A549 (cell line): ENCODE measurements at regions of chr11 and their contacts with region 1.

Region 1: DNA sequence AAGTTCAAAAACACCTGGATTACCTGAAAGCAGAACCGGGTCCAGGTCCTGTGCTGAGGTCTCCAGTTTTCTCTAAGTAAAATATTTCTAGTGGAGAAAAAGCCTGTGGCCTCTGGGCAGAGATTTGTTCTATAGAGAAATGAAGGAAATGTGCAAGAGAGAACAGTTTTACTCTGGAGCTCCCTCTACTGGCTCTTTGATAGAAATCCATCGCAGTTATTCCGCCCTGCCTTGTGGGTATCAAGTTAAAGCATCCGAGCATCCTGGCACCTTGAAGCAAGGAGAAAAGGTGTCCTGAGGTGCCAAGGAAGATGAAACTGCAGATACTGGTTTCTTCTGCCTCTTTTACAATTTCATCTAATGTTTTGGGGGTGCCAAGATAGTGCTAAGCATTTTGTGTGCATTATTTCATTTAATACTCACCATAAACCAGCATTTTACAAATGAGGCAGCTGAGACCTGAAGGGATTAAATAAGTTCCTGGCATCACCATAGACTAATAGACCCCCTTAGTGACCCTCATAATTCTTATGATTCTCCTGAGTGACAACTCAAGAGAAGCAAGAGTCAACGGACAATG is 113.1 kb upstream of the HSD17B12 start:
- DNase-seq: peak; percentile 58 to 67
- ATAC-seq: peak; percentile 60 to 90; a peak in 4 of 6 replicates
- H3K4me3 ChIP-seq: no peak overlapping the region
- H3K27ac ChIP-seq: no peak overlapping the region
- H3K4me1 ChIP-seq: no peaks in the 10 kb centered on the region
- CTCF ChIP-seq: peak; percentile 68
- EP300 ChIP-seq: no peak
- POLR2A ChIP-seq: no peak
- RAD21 ChIP-seq: peak; percentile 39 to 48; a peak in 3 of 5 replicates

Region 2: DNA sequence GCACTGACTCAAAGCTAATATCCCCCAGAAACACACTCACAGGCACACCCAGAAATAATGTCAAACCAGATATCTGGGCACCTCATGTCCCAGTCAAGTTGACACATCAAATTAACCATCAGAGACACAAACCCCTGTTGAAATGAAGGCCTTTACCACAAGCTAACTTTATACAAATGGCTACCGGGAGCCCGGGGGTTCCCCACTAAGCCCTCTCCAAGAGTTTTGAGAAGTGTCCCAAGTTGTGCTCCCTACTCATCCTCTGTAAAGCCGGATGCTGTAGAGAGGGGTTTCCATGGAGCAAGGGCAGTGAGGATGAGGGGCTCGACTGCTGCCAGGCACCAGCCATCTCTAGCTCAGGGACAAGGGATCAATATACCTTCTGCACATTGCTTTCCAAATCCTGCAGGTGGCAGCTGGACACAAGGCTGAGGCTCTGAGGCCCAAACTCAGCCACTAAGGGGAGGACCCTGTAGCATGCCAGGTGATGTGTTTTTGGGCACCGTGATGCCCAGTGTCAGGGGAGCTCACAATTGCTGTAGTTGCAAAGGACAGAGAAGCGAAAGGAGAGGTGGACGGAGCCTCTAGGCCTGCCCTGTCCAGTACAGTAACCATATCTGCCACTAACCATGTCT is 63.1 kb before region 1 on chr11:
- CTCF ChIA-PET with region 1: interaction called, 30 read pairs
- POLR2A ChIA-PET with region 1: no interaction called
- DNase-seq: peak; percentile 28 to 39
- ATAC-seq: peak; percentile 80 to 84; a peak in 5 of 6 replicates
- H3K4me3 ChIP-seq: no peak overlapping the region
- H3K27ac ChIP-seq: no peak overlapping the region
- H3K4me1 ChIP-seq: no peaks in the 10 kb centered on the region
- CTCF ChIP-seq: no peak
- EP300 ChIP-seq: no peak
- POLR2A ChIP-seq: no peak
- RAD21 ChIP-seq: peak; percentile 47 to 65; a peak in 4 of 5 replicates

Region 3: GRCh38 chr11:43601511-43601910 is 34.0 kb after region 1 on chr11:
- CTCF ChIA-PET with region 1: no interaction called
- POLR2A ChIA-PET with region 1: no interaction called
- DNase-seq: no peak
- ATAC-seq: no peak
- H3K4me3 ChIP-seq: no peak overlapping the region
- H3K27ac ChIP-seq: no peak overlapping the region
- H3K4me1 ChIP-seq: no peaks in the 10 kb centered on the region
- CTCF ChIP-seq: no peak
- EP300 ChIP-seq: no peak
- POLR2A ChIP-seq: no peak
- RAD21 ChIP-seq: no peak

Region 4: GRCh38 chr11:43765194-43765593 is 197.7 kb after region 1 on chr11:
- CTCF ChIA-PET with region 1: no interaction called
- POLR2A ChIA-PET with region 1: no interaction called
- DNase-seq: no peak
- ATAC-seq: no peak
- H3K4me3 ChIP-seq: no peak overlapping the region
- H3K27ac ChIP-seq: no peak overlapping the region
- H3K4me1 ChIP-seq: no peaks in the 10 kb centered on the region
- CTCF ChIP-seq: no peak
- EP300 ChIP-seq: no peak
- POLR2A ChIP-seq: no peak
- RAD21 ChIP-seq: no peak

Region 5: DNA sequence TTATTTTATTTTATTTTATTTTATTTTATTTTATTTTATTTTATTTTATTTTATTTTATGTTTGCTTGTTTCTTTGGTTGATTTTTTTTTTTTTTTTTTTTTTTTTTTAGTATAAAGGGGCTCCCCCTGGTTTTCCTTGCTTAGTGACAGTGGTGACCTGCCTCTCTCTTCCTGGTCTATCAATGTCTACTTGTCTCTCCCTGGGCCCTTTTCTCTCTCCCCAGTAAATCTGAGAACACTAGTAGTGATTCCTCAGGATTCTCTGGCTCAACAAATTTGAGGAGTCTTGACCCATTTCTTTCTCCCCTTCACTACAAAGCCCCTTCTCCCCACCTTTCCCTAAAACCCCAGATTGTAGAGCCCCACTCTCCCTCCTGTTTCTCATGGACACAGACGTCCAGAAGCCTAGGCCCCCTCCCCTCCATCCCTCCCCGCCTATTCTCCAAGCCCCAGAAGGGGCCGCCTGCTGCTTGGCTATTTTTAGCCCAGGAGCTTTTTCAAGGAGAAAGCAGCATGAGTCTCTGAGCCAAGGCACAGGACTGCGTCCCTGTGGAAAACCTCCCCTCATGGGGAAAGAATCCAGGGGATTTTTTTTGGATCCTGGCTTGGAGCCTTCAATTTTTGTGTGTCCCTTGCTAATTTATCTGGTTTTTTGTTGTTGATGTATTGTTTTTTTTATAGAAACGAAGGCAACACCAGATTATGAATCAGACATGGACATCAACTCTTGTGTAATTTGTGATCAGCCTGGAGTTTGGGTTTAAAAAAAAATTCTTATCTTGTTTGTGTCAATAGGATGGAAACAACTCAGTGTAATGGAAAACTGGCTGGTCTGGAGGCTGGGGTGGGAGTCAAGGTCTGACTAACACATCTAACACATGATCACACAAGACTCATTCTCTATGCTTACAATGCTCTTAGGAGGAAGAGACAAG is 462.8 kb after region 1 on chr11:
- CTCF ChIA-PET with region 1: no interaction called
- POLR2A ChIA-PET with region 1: no interaction called
- DNase-seq: no peak
- ATAC-seq: no peak
- H3K4me3 ChIP-seq: no peak overlapping the region
- H3K27ac ChIP-seq: no peak overlapping the region
- H3K4me1 ChIP-seq: no peaks in the 10 kb centered on the region
- CTCF ChIP-seq: no peak
- EP300 ChIP-seq: no peak
- POLR2A ChIP-seq: no peak
- RAD21 ChIP-seq: no peak